Activated CD8-positive, alpha-beta T cell treated with anti-CD3 and anti-CD28 coated beads, Interleukin-2, amount 10 ng/mL, durations not matched to agents 7 days and 5 days (primary cell): ENCODE measurements at regions of chr7 and their contacts with region 1.

Region 1: DNA sequence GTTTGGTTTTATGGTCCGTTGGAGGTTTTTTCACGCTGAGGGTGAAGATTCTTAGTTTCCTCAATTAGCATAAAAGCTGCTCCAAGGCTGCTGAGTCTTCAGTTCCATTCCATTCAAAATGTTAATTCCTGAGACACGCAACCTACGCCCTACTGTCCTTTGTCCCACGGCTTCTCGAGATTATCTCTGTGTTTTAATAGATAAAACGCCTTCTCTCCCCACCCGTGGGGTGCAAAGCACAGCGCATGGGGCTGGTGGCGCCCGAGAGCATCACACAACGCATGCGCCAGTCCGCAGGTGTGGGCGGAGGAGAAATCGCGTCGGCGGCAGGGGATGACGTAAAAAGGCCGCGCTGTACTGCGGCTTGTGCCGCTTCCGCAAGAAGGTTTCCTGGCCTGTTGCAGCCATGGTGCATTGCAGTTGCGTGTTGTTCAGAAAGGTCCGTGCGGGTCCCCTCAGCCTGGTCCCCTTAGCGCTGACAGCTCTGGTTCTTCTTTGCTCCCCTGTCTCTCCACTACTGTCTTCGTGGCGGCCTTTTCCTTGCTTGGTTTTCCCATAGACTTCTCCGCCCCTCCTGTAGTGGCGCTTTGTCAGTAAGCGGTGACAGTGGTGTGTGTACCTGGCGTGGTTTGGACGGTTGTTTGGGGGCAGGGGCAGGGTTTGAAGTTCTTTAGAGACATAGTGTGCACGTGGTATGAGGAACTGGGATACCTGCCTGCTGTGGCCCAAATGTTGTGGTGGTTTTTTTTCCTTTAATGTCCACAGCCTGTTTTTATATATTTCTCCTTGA is at the start of gene GTPBP10:
- DNase-seq: peak; percentile 96
- ATAC-seq: peak; percentile 98
- H3K4me3 Mint-ChIP-seq: peak within 1 kb of the TSS; percentile 94
- H3K27ac Mint-ChIP-seq: peak within 1 kb of the TSS; percentile 99
- H3K4me1 Mint-ChIP-seq: peaks cover 27% of the 10 kb centered on the region
- H3K27me3 Mint-ChIP-seq: no peaks in the 10 kb centered on the region
- total RNA-seq, gene GTPBP10: 22.5 to 23.1 TPM

Region 2: DNA sequence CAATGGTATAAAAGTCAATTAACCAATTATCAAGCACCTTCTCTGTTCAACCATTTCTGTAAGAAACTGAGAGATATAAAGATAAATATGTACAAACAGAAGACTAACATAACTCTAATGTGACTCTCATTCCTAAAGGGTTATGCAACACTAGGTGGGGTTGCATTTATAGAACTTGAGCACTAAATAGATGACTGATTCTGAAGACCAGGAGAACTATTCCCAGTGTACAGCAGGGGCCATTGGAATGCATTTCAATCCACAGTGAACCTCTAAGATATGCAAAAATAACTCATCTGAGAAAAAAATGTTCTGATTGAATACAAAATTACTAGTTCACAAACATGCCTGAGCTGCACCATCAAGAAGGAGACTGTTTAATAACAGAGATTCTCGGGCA is 533.5 kb before region 1 on chr7:
- CTCF ChIA-PET with region 1: no interaction called
- POLR2A ChIA-PET with region 1: no interaction called
- DNase-seq: no peak
- ATAC-seq: no peak
- H3K4me3 Mint-ChIP-seq: no peak overlapping the region
- H3K27ac Mint-ChIP-seq: no peak overlapping the region
- H3K4me1 Mint-ChIP-seq: no peaks in the 10 kb centered on the region
- H3K27me3 Mint-ChIP-seq: no peaks in the 10 kb centered on the region

Region 3: DNA sequence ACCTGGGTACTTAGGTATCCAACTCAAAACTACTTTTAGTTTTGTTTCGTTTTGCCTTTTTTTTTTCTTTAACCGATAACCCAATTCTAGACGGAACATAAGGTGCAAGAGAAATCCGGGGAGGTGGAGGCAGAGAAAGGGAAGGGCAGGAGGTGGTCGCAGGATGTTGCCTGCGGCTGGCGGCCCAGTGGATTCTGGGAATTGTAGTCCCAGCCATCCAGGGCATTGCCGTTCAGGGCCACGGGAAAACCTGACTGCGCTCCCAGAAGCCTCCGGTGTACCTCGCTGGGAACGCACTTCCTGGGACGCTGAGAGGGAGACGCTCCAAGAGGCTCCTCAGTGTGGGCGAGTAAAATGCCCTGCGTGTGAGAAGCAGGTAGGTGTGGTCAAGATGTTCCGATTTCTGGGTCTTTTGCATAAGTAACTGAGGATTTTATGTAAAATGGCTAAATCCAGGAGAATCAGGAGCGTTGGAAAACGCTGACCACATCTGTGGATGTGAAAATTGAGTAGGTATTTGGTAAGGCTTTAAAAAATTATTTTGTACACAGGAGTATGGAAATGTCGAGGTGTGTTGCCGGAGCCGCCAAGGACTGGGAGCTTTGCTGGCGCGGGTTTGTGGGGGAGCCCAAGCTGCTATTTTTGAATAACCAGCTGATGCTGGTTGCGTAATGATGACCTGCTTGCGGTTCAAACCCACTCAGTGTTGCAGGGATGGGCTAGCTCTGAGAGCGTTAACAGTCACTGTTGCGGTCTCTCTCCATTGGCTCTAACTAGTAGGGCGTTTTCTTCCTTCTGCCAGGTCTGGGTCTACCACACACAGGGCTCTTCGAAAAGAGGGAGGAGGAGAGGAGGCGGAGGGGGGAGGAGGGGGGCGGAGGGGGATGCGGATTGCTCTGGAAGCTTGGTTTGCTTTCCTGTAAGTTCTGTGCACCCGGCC is 56.9 kb after region 1 on chr7 and contains the start of gene CLDN12:
- CTCF ChIA-PET with region 1: interaction called, 11 read pairs
- POLR2A ChIA-PET with region 1: interaction called, 10 read pairs
- DNase-seq: peak; percentile 86
- ATAC-seq: peak; percentile 98
- H3K4me3 Mint-ChIP-seq: peak within 1 kb of the TSS; percentile 88
- H3K27ac Mint-ChIP-seq: peak within 1 kb of the TSS; percentile 88
- H3K4me1 Mint-ChIP-seq: peaks cover 17% of the 10 kb centered on the region
- H3K27me3 Mint-ChIP-seq: peaks cover 16% of the 10 kb centered on the region
- total RNA-seq, gene CLDN12: 1.7 to 2.6 TPM

Region 4: DNA sequence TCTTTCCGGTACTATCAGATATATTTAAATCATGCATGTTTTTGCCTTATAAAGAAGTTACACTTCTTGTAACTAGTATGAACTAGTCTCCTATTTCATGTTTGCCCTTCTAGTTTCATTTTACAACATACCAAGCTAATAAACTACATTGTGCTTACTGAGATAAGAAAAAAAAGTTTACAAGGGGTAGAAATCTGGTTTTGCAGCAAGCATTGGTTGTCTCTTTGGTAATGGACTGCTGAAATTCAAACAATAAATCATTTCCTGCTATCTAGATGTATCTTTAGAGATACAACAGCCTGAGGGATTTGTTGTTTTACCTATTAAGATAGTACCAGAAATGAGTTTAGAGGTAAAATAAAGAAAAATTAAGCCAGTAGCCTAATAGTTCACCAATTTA is 141.7 kb after region 1 on chr7:
- CTCF ChIA-PET with region 1: no interaction called
- POLR2A ChIA-PET with region 1: no interaction called
- DNase-seq: no peak
- ATAC-seq: no peak
- H3K4me3 Mint-ChIP-seq: no peak overlapping the region
- H3K27ac Mint-ChIP-seq: no peak overlapping the region
- H3K4me1 Mint-ChIP-seq: no peaks in the 10 kb centered on the region
- H3K27me3 Mint-ChIP-seq: peaks cover 5% of the 10 kb centered on the region